ENCODE measurements at regions of chr20 and their contacts with region 1.

Region 1: DNA sequence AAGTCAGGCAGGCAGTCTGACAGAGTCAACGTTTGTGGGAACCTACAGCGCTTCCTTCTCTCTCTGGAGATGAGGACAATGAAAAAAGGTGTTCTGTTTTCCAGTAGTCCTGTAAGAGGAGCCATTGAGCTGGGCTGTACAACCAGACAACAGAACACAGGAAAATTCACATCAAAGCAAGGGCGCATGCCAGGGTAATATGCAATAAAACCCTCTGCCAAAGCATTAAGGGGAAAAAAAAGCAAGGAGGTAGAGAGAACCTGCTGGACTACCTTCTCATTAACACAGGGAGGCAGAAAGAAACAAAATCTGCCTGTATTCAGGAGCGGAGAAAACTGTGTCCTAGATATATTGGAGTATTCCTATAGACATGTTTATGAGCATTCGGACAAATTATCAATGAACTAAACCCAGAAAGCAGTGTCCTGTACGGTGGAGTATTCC is 1.3 kb downstream of the RNF24 start:
- DNase-seq: peak; percentile 89
- H3K4me3 Mint-ChIP-seq: peak overlapping the region; percentile 74
- H3K27ac Mint-ChIP-seq: peak overlapping the region; percentile 46
- H3K4me1 Mint-ChIP-seq: peaks cover 32% of the 10 kb centered on the region
- H3K27me3 Mint-ChIP-seq: no peaks in the 10 kb centered on the region
- CTCF ChIP-seq: peak; percentile 79

Region 2: GRCh38 chr20:3888622-3889488 is 125.2 kb before region 1 on chr20 and contains the start of gene PANK2:
- CTCF ChIA-PET with region 1: interaction called, 3 read pairs
- POLR2A ChIA-PET with region 1: interaction called, 7 read pairs
- intact Hi-C with region 1: loop called (anchors 2 kb)
- DNase-seq: peak; percentile 99
- H3K4me3 Mint-ChIP-seq: peak within 1 kb of the TSS; percentile 91
- H3K27ac Mint-ChIP-seq: peak within 1 kb of the TSS; percentile 96
- H3K4me1 Mint-ChIP-seq: peaks cover 19% of the 10 kb centered on the region
- H3K27me3 Mint-ChIP-seq: no peaks in the 10 kb centered on the region
- CTCF ChIP-seq: peak; percentile 11
- total RNA-seq, gene PANK2: 29.2 and 32.8 TPM in 2 replicates

Region 3: DNA sequence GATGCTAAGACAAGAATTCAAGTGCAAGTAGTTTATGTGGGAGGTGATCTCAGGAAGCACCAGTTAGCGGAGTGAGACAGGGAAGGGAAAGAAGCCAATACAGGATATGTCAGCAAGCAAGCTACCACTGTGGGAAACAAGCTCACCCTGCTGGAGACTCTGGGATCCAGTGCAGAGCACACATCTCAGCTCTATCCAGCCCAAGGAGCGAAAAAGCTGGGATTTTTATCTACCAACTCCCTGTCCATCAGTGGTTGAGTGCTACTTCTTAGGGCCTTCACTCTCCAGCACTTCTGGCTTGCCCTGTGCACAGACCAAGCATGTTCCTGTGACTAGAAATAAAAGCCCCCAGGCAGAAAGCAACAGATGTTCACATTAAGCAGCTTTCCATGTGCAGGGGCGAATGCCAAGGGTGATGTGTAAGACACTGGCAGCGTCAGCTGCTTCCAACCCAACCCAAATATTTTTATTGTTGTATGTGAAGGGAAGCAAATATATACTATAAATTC is 12.1 kb after region 1 on chr20:
- CTCF ChIA-PET with region 1: interaction called, 5 read pairs
- POLR2A ChIA-PET with region 1: interaction called, 10 read pairs
- intact Hi-C with region 1: no loop called
- DNase-seq: peak; percentile 79
- H3K4me3 Mint-ChIP-seq: no peak overlapping the region
- H3K27ac Mint-ChIP-seq: peak overlapping the region; percentile 17
- H3K4me1 Mint-ChIP-seq: peaks cover 32% of the 10 kb centered on the region
- H3K27me3 Mint-ChIP-seq: no peaks in the 10 kb centered on the region
- CTCF ChIP-seq: peak; percentile 11

Region 4: DNA sequence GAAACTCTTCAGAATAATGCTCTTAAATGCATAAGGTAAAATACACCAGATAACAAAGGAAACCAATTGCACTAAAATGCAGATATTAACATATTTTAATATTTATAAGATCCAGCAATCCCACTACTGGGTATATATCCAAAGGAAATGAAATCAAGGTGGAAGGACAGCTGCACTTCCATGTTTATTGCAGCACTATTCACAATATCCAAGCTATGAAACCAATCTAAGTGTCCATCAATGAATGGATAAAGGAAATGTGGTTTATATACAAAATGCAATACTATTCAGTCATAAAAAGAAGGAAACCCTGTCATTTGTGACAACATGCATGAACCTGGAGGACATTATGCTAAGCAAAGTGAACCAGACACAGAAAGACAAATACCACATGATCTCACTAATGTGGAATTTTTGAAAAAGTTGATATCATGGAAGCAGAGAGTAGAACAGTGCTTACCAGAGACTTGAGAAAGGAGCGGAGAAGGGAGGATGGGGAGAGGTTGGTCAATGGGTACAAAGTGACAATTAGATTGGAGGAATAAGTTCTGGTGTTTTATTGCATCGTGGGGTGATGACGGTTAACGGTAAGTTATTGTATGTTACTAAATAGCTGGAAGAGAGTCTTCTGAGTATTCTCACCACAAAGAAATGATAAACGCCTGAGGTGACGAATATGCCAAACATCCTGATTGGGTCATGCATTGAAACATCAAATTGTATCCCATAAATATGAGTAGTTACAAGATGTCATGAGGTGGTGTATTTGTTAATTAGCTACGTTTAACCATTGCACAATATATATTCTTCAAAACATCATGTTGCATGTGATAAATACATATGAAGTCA is 39.2 kb after region 1 on chr20:
- CTCF ChIA-PET with region 1: interaction called, 6 read pairs
- POLR2A ChIA-PET with region 1: interaction called, 3 read pairs
- intact Hi-C with region 1: loop called (anchors 1 kb)
- DNase-seq: peak; percentile 69
- H3K4me3 Mint-ChIP-seq: no peak overlapping the region
- H3K27ac Mint-ChIP-seq: no peak overlapping the region
- H3K4me1 Mint-ChIP-seq: peaks cover 18% of the 10 kb centered on the region
- H3K27me3 Mint-ChIP-seq: no peaks in the 10 kb centered on the region
- CTCF ChIP-seq: no peak

Region 5: GRCh38 chr20:4069751-4070150 is 55.7 kb after region 1 on chr20:
- CTCF ChIA-PET with region 1: interaction called, 25 read pairs
- POLR2A ChIA-PET with region 1: interaction called, 18 read pairs
- intact Hi-C with region 1: loop called (anchors 1 kb)
- DNase-seq: peak; percentile 53
- H3K4me3 Mint-ChIP-seq: no peak overlapping the region
- H3K27ac Mint-ChIP-seq: no peak overlapping the region
- H3K4me1 Mint-ChIP-seq: peaks cover 55% of the 10 kb centered on the region
- H3K27me3 Mint-ChIP-seq: no peaks in the 10 kb centered on the region
- CTCF ChIP-seq: no peak

Region 6: GRCh38 chr20:4082406-4083097 is 68.5 kb after region 1 on chr20:
- CTCF ChIA-PET with region 1: interaction called, 81 read pairs
- POLR2A ChIA-PET with region 1: interaction called, 26 read pairs
- intact Hi-C with region 1: loop called (anchors 1 kb)
- DNase-seq: no peak
- H3K4me3 Mint-ChIP-seq: no peak overlapping the region
- H3K27ac Mint-ChIP-seq: no peak overlapping the region
- H3K4me1 Mint-ChIP-seq: peaks cover 22% of the 10 kb centered on the region
- H3K27me3 Mint-ChIP-seq: no peaks in the 10 kb centered on the region
- CTCF ChIP-seq: no peak

Region 7: GRCh38 chr20:4195499-4195898 is 181.4 kb after region 1 on chr20:
- CTCF ChIA-PET with region 1: no interaction called
- POLR2A ChIA-PET with region 1: no interaction called
- intact Hi-C with region 1: no loop called
- DNase-seq: peak; percentile 30
- H3K4me3 Mint-ChIP-seq: no peak overlapping the region
- H3K27ac Mint-ChIP-seq: no peak overlapping the region
- H3K4me1 Mint-ChIP-seq: peaks cover 37% of the 10 kb centered on the region
- H3K27me3 Mint-ChIP-seq: no peaks in the 10 kb centered on the region
- CTCF ChIP-seq: peak; percentile 27

Region 8: GRCh38 chr20:4413314-4414049 is 399.4 kb after region 1 on chr20:
- CTCF ChIA-PET with region 1: no interaction called
- POLR2A ChIA-PET with region 1: no interaction called
- intact Hi-C with region 1: no loop called
- DNase-seq: no peak
- H3K4me3 Mint-ChIP-seq: no peak overlapping the region
- H3K27ac Mint-ChIP-seq: no peak overlapping the region
- H3K4me1 Mint-ChIP-seq: no peaks in the 10 kb centered on the region
- H3K27me3 Mint-ChIP-seq: no peaks in the 10 kb centered on the region
- CTCF ChIP-seq: no peak